Breast epithelium (tissue), 4 donors: ENCODE measurements at regions of chr7 and their contacts with region 1.

Region 1: GRCh38 chr7:100553864-100554263 is 14.9 kb downstream of the AGFG2 start:
- DNase-seq: no peak
- H3K4me3 ChIP-seq: no peak overlapping the region
- H3K27ac ChIP-seq: no peak overlapping the region
- H3K4me1 ChIP-seq: no peaks in the 10 kb centered on the region
- H3K27me3 ChIP-seq: no peaks in the 10 kb centered on the region
- CTCF ChIP-seq: no peak
- POLR2A ChIP-seq: no peak

Region 2: GRCh38 chr7:99881370-99881769 is 672.5 kb before region 1 on chr7:
- intact Hi-C with region 1: loop called (anchors 5 kb)
- DNase-seq: no peak
- H3K4me3 ChIP-seq: no peak overlapping the region
- H3K27ac ChIP-seq: no peak overlapping the region
- H3K4me1 ChIP-seq: no peaks in the 10 kb centered on the region
- H3K27me3 ChIP-seq: no peaks in the 10 kb centered on the region
- CTCF ChIP-seq: no peak
- POLR2A ChIP-seq: no peak

Region 3: DNA sequence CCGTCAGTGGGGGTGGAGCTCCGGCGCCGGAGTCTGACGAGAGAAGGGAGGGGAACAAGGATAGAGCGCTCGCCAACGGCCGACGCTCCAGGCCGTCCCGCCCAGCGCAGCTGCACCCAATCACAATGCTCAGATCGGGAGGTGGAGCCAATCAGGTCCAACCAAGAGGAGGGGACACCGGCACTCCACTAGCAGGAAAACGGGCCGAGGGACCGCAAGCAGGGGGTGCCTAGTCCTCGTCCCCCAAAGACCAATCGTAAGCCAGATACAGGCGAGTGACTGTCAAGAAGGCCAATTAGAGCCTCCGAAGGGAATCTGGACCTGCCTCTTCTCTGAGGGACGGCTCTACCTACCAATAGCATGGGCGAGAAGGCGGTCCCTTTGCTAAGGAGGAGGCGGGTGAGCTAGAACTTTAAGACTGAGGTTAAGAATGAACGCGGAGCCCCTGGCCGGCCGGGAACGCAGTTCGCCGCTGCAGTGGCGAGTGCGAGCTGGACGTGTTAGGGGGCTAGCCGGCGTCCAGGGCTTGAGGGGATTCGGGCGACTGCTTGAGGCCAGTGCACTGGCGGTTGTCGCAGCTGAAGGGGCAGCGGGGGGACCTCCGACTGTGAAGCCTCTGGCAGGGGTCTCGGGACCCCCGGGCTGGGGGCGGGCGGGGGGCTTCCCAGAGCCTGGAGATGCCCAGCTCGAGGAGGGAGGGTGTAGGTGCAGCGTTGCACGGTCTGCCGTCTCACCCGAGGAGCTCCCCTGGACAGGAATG is 32.6 kb after region 1 on chr7 and contains the start of gene FBXO24:
- intact Hi-C with region 1: no loop called
- DNase-seq: peak; percentile 100
- H3K4me3 ChIP-seq: peak within 1 kb of the TSS; percentile 91 to 97 (median 95)
- H3K27ac ChIP-seq: peak within 1 kb of the TSS; percentile 98 to 99
- H3K4me1 ChIP-seq: peaks cover 5 to 23% of the 10 kb centered on the region in 2 donors
- H3K27me3 ChIP-seq: no peaks in the 10 kb centered on the region
- CTCF ChIP-seq: no peak
- POLR2A ChIP-seq: no peak
- total RNA-seq, gene FBXO24: 0.59 to 0.98 TPM in 2 of 3 donors, not detected in the other

Region 4: DNA sequence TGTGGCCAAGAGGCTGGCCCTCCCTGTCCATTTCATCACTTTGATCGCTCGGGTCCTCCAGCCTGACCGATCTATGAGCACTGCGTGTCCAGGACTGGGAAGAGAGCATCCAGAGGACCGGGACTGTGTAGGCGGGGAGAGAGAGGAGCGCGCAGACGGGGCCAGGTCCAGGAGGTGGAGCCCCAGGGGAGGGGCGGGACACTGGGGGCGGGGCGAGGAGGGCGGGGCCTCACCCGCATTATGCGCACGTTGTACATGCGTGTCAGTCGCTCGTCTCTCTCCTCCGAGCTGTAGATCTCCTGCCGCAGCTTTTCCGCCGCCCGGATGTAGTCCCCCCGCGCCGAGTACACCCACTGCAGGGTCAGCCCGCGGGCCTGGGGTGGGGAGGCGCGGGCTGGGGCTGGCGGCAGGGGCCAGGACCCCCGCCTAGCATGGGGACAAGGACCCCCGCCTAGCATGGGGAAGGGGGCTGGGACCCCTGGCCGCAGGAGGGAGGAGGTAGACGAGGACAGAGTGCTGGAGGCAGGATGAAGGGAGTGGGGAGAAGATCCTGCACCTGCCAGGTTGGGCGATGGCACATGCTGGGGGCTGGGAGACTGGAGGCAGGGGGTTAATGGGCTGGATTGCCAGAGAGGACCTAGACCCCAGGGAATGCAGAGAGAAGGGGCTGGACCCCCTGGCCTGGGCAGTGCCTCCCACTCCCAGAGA is 72.8 kb after region 1 on chr7:
- intact Hi-C with region 1: no loop called
- DNase-seq: peak; percentile 66 to 80
- H3K4me3 ChIP-seq: peak overlapping the region; percentile 18 to 66 (median 44)
- H3K27ac ChIP-seq: peak overlapping the region in 1 of 2 donors; percentile 38
- H3K4me1 ChIP-seq: no peaks in the 10 kb centered on the region
- H3K27me3 ChIP-seq: no peaks in the 10 kb centered on the region
- CTCF ChIP-seq: no peak
- POLR2A ChIP-seq: no peak

Region 5: DNA sequence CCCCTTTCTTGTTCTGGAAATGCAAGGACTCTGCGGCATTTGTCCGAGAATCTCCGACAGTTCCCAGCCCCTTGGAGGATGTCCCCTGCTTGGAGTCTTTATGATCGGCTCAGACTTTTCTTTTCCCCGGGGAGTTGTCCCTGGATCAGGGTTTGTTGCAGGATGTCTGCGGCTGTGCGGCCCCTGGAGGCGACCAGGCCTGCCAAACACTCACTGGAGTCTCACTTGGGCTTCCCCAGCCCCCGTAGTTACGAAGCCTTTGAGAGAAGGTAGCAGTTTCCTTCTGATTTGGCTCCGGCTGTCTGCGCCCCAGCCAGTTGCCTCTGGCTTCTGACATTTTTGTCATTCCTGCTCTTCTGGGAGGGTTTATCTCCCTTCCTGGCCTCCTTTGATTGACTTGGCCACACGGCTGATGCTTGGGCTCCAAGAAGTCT is 824.9 kb after region 1 on chr7:
- intact Hi-C with region 1: no loop called
- DNase-seq: peak in 1 of 2 donors; percentile 37
- H3K4me3 ChIP-seq: peak overlapping the region in 1 of 3 donors; percentile 22
- H3K27ac ChIP-seq: no peak overlapping the region
- H3K4me1 ChIP-seq: no peaks in the 10 kb centered on the region
- H3K27me3 ChIP-seq: no peaks in the 10 kb centered on the region
- CTCF ChIP-seq: no peak
- POLR2A ChIP-seq: no peak